ENCODE measurements at regions of chr17 and their contacts with region 1.

Region 1: DNA sequence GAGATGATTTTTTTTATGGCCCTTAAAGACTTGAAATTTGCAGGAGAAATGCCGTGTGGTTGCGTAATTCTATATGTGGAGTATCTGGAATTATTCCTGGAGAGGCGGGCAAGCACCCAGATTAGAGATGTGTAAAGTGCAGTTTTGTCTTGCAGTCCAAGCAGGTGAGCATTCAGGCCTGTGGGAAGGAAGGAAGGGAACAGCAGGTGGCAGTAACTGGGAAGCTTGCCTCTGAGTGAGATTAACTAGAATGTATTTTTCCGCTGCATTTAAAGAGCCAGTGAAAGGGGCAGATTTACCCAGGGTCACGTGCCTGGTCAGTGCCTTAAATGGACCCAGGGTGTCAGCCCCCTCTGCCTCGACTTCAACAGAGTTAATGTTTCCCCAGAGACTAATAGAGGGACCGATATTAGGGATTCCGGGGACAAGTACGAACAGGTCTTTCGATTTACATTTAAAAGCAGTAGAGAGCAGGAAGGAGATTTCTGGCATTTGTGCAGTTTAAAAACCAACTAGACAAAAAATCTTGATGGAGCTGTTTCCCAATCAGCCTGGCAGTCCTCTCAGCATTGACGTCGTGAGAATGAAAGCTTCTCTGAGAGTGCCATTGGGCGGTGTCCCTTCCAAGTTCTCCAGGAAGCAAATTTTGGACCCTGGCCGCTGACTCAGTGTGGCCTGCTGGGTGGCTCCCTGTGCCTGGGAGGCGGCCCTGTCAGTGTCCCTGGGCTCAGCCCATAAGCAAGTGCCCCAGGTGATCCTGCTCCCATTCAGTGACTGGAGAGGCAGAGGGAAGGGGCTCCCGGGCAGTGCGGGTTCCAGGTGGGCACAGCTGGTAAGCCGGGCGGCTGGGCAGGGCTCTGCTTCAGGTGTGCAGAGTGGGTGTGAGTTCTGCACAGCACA is 38.2 kb downstream of the KSR1 start:
- DNase-seq: peak; percentile 93
- H3K4me3 Mint-ChIP-seq: peak overlapping the region; percentile 73
- H3K27ac Mint-ChIP-seq: peak overlapping the region; percentile 88
- H3K4me1 Mint-ChIP-seq: peaks cover 22% of the 10 kb centered on the region
- H3K27me3 Mint-ChIP-seq: no peaks in the 10 kb centered on the region
- CTCF ChIP-seq: peak; percentile 26

Region 2: DNA sequence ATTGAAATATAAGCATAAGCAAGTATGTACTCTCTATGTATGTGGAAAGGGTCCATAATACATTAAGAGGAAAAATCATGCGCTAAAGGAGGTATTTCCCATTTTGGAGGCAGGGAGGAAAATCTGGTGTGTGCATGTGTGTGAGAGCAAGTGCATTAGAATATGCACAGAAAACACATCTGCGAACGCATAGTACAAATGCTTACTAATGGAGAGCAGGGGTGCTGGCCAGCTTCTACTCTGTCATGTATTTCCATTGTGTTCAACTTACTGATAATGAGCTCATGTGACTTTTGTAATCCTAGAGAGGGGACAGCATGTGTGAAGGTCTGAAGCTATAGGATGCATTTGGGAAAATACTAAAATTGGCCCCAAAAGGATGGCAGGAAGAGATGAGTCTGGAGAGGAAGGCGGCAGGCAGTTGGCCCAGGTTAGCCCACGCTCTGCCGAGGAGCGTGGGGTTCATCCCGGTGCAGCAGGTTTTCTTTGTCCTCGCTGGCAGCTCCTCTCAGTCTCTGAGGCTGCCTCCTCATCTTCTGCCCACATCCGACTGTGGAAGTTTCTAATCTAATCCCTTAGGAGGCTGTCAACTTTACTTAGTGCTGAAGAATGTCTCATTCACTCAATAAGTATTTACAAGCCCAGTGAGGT is 56.0 kb before region 1 on chr17:
- CTCF ChIA-PET with region 1: no interaction called
- POLR2A ChIA-PET with region 1: no interaction called
- intact Hi-C with region 1: no loop called
- DNase-seq: no peak
- H3K4me3 Mint-ChIP-seq: no peak overlapping the region
- H3K27ac Mint-ChIP-seq: no peak overlapping the region
- H3K4me1 Mint-ChIP-seq: no peaks in the 10 kb centered on the region
- H3K27me3 Mint-ChIP-seq: peaks cover 61% of the 10 kb centered on the region
- CTCF ChIP-seq: no peak

Region 3: GRCh38 chr17:27533856-27534815 is 39.7 kb after region 1 on chr17:
- CTCF ChIA-PET with region 1: interaction called, 4 read pairs
- POLR2A ChIA-PET with region 1: interaction called, 3 read pairs
- intact Hi-C with region 1: loop called (anchors 1 kb)
- DNase-seq: peak; percentile 70
- H3K4me3 Mint-ChIP-seq: no peak overlapping the region
- H3K27ac Mint-ChIP-seq: peak overlapping the region; percentile 40
- H3K4me1 Mint-ChIP-seq: peaks cover 28% of the 10 kb centered on the region
- H3K27me3 Mint-ChIP-seq: no peaks in the 10 kb centered on the region
- CTCF ChIP-seq: no peak

Region 4: DNA sequence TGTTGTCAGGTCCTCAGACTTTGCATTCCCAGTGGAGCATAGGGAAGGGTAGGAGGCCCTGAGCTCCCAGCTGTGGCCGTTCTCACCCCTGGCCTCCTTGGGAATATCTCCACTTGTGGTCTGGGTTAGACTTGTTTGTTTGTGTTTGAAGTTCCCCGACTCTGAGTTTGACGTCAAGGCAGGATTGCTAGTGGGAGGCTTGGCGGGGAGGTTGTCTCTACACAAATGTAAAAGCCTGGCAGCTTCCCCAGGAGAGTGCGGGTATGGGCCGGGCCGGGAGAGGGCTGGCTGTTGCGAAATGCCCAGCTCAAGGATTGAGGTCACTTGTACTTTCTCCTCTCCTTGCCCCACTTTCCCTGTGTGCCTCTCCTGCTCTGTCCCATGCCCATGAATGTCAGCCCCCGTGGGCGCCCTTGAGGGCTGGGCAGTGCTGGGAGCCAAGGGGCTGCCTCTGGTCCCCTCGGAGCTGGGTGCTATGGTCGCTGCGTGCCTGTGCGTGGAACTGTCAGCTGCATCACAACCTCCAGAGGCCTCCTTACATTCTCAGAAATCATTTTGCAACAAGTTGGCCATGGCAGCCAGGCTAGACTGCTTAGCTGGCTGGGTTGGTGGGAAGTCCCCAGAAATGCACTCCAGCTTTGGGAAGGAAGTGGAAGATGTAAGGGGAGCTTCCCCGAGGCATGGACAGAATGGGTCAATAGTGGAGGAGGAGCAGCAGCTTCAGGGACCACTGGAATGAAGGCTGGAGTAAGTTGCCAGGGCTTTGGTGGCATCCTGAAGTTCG is 46.1 kb after region 1 on chr17:
- CTCF ChIA-PET with region 1: interaction called, 6 read pairs
- POLR2A ChIA-PET with region 1: interaction called, 5 read pairs
- intact Hi-C with region 1: loop called (anchors 1 kb)
- DNase-seq: peak; percentile 99
- H3K4me3 Mint-ChIP-seq: peak overlapping the region; percentile 32
- H3K27ac Mint-ChIP-seq: peak overlapping the region; percentile 78
- H3K4me1 Mint-ChIP-seq: peaks cover 43% of the 10 kb centered on the region
- H3K27me3 Mint-ChIP-seq: no peaks in the 10 kb centered on the region
- CTCF ChIP-seq: no peak

Region 5: DNA sequence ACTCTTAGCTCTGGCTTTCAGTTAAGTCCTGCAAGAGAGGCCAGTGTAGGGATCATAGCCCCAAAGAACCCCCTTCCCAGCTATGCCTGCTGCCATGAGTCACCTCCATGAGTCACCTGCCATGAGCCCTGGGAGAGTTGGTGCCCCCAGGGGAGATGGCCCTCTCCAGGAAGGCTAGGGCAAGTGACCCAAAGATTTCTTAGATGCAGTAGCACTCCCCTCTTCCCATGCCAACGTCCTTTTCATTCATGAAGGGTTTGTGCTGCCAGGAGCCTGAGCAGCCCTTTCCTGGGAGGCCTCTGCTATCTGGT is 58.0 kb after region 1 on chr17:
- CTCF ChIA-PET with region 1: interaction called, 9 read pairs
- POLR2A ChIA-PET with region 1: interaction called, 12 read pairs
- intact Hi-C with region 1: no loop called
- DNase-seq: peak; percentile 94
- H3K4me3 Mint-ChIP-seq: no peak overlapping the region
- H3K27ac Mint-ChIP-seq: peak overlapping the region; percentile 20
- H3K4me1 Mint-ChIP-seq: peaks cover 30% of the 10 kb centered on the region
- H3K27me3 Mint-ChIP-seq: no peaks in the 10 kb centered on the region
- CTCF ChIP-seq: no peak

Region 6: DNA sequence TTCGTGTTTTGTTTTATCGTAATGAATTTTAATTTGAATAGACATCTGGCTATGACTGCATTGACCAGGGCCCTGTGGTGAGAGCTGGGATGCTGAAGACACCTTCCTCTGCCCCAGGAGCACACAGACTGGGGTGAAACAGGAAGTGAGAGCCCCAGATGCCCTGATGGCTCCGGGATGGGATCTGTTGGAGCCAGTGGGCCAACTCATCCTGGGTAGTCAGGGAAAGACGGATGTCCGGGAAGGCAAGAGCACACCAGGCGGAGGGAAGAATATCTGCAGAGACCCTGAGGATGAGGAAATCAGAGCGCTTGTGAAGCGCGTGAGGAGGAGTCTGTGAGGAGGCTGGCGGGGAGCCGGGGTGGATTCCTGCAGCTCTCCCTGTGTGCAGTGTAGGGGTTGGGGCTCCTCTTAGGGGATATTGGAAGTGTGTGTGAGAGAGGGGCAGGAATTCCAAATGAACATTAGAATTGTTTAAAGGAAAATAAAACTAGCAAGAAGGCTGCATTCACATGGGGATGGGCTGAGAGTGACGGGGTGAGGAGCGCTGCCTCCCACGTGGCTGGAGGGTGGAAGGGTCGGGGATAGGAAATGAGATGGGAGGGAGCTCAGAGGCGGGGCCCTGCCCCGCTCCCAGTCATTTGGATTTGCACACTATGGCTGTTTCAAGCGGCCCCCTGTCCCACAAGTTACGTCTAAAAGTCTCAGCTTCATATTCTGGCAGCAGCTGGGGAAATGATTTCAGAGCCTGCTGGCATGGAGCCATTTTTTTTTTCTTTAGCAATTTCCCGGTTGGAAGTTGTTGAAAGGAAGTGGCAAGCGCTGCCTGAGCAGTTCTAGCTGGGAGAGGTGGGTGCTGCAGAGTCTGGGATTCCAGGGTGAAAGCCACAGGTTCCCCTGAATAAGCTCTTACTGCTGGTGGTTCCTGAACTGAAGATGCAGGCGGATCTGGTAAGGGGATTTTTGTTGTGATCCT is 65.4 kb after region 1 on chr17:
- CTCF ChIA-PET with region 1: interaction called, 10 read pairs
- POLR2A ChIA-PET with region 1: interaction called, 4 read pairs
- intact Hi-C with region 1: no loop called
- DNase-seq: peak; percentile 90
- H3K4me3 Mint-ChIP-seq: no peak overlapping the region
- H3K27ac Mint-ChIP-seq: no peak overlapping the region
- H3K4me1 Mint-ChIP-seq: peaks cover 24% of the 10 kb centered on the region
- H3K27me3 Mint-ChIP-seq: no peaks in the 10 kb centered on the region
- CTCF ChIP-seq: no peak

Region 7: GRCh38 chr17:27593232-27593856 is 98.9 kb after region 1 on chr17:
- CTCF ChIA-PET with region 1: interaction called, 196 read pairs
- POLR2A ChIA-PET with region 1: interaction called, 5 read pairs
- intact Hi-C with region 1: no loop called
- DNase-seq: no peak
- H3K4me3 Mint-ChIP-seq: no peak overlapping the region
- H3K27ac Mint-ChIP-seq: no peak overlapping the region
- H3K4me1 Mint-ChIP-seq: peaks cover 5% of the 10 kb centered on the region
- H3K27me3 Mint-ChIP-seq: no peaks in the 10 kb centered on the region
- CTCF ChIP-seq: no peak

Region 8: GRCh38 chr17:27892866-27893769 is 398.7 kb after region 1 on chr17 and contains the start of gene LYRM9:
- CTCF ChIA-PET with region 1: no interaction called
- POLR2A ChIA-PET with region 1: no interaction called
- intact Hi-C with region 1: no loop called
- DNase-seq: peak; percentile 81
- H3K4me3 Mint-ChIP-seq: peak within 1 kb of the TSS; percentile 70
- H3K27ac Mint-ChIP-seq: peak within 1 kb of the TSS; percentile 32
- H3K4me1 Mint-ChIP-seq: peaks cover 5% of the 10 kb centered on the region
- H3K27me3 Mint-ChIP-seq: peaks cover 28% of the 10 kb centered on the region
- CTCF ChIP-seq: peak; percentile 87
- total RNA-seq, gene LYRM9: 6.4 and 7.4 TPM in 2 replicates